Activated T-helper 1 cell treated with anti-CD3 and anti-CD28 coated beads, Interleukin-12 subunit alpha, Interleukin-12 subunit beta, Interleukin-2, Interleukin-4 antibody, amounts not matched to agents 30 ng/mL and 10 ng/mL and 1 ng/mL, durations not matched to agents 14 hours and 24 hours and 36 hours (primary cell): ENCODE measurements at regions of chr9 and their contacts with region 1.

Region 1: GRCh38 chr9:105881654-105882349 is 187.5 kb downstream of the TMEM38B start:
- DNase-seq: peak; percentile 52
- H3K4me3 Mint-ChIP-seq: no peak overlapping the region
- H3K27ac Mint-ChIP-seq: no peak overlapping the region
- H3K4me1 Mint-ChIP-seq: peaks cover 30% of the 10 kb centered on the region
- H3K27me3 Mint-ChIP-seq: peaks cover 14% of the 10 kb centered on the region

Region 2: DNA sequence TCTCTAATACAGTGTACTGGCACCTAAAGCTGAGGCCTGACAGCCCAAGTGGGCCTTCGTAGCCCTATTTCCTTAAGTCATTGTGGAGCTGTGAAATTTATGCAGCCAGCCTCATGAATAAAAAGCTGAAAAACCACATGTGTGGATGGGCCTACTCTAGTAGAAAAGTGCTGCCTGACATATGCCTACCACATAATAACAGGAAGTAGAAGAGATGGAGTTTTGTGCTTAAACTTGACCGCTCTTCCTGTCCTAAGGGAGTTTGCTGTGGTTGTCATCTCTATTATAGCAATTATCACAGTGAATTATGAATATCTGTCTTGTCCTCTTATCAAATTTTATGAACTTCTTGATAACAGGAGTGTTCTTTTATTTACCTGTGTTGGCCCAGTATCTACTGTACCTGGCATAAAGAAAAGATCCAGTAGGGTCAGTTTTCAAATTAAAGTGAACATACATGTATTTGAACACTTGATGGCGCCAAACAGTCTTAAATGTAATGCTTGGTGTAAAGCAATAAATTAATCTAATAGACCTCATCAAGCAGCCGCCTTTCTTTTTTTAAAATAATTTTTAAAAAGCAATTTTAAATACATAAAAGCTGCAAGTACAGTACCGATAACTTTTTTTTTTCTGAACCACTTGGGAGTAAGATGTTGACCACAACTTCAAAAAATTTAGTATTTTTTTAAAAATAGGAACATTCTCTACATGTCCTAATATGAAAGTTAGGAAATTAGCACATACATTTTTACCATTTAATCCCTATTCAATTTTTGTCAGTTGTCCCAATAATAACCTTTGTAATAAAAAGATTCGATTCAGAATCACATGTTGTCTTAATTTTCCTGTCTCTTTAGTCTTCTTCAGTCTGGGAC is 272.8 kb before region 1 on chr9:
- intact Hi-C with region 1: loop called (anchors 5 kb)
- DNase-seq: no peak
- H3K4me3 Mint-ChIP-seq: no peak overlapping the region
- H3K27ac Mint-ChIP-seq: no peak overlapping the region
- H3K4me1 Mint-ChIP-seq: no peaks in the 10 kb centered on the region
- H3K27me3 Mint-ChIP-seq: no peaks in the 10 kb centered on the region

Region 3: DNA sequence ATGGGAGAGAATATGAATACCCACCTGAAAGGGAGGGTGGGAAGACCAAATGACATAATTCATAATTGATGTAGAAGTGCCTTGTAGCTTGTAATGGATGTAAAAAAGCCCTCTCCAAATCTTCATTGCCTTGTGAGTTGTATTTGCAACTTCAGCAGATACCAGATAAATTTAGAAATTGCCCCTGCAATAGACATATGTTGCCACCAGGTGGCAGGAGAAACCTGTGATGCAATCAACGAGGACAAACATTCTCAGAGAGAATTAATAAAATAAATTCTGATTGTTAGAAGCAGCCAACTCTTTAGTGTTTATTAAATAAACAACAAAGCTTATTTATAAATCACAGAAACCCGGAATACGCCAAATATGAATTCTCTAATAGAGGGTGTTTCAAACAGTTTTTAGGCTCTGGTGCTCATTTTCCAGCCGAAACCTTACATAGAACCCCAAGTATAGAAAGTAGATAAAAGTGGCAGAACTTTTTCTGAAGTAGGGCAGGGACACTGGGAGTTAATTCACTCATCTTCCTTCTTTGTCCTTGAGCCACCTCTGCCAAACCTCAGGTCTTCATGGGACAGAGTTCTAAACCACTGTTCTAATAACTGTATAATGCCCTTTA is 39.7 kb before region 1 on chr9:
- intact Hi-C with region 1: loop called (anchors 1 kb)
- DNase-seq: no peak
- H3K4me3 Mint-ChIP-seq: no peak overlapping the region
- H3K27ac Mint-ChIP-seq: no peak overlapping the region
- H3K4me1 Mint-ChIP-seq: no peaks in the 10 kb centered on the region
- H3K27me3 Mint-ChIP-seq: peaks cover 5% of the 10 kb centered on the region